ENCODE measurements at regions of chr11 and their contacts with region 1.

Region 1: GRCh38 chr11:60363542-60364510 is 14.5 kb upstream of the MS4A7 start:
- DNase-seq: peak; percentile 71
- H3K4me3 Mint-ChIP-seq: no peak overlapping the region
- H3K27ac Mint-ChIP-seq: no peak overlapping the region
- H3K4me1 Mint-ChIP-seq: no peaks in the 10 kb centered on the region
- H3K27me3 Mint-ChIP-seq: peaks cover 16% of the 10 kb centered on the region

Region 2: GRCh38 chr11:60345489-60345888 is 18.3 kb before region 1 on chr11:
- CTCF ChIA-PET with region 1: interaction called, 11 read pairs
- DNase-seq: peak; percentile 25
- H3K4me3 Mint-ChIP-seq: no peak overlapping the region
- H3K27ac Mint-ChIP-seq: no peak overlapping the region
- H3K4me1 Mint-ChIP-seq: no peaks in the 10 kb centered on the region
- H3K27me3 Mint-ChIP-seq: no peaks in the 10 kb centered on the region

Region 3: GRCh38 chr11:60625262-60625661 is 261.4 kb after region 1 on chr11:
- CTCF ChIA-PET with region 1: interaction called, 48 read pairs
- DNase-seq: no peak
- H3K4me3 Mint-ChIP-seq: no peak overlapping the region
- H3K27ac Mint-ChIP-seq: no peak overlapping the region
- H3K4me1 Mint-ChIP-seq: no peaks in the 10 kb centered on the region
- H3K27me3 Mint-ChIP-seq: no peaks in the 10 kb centered on the region